ENCODE measurements at regions of chr13 and their contacts with region 1.

Region 1: DNA sequence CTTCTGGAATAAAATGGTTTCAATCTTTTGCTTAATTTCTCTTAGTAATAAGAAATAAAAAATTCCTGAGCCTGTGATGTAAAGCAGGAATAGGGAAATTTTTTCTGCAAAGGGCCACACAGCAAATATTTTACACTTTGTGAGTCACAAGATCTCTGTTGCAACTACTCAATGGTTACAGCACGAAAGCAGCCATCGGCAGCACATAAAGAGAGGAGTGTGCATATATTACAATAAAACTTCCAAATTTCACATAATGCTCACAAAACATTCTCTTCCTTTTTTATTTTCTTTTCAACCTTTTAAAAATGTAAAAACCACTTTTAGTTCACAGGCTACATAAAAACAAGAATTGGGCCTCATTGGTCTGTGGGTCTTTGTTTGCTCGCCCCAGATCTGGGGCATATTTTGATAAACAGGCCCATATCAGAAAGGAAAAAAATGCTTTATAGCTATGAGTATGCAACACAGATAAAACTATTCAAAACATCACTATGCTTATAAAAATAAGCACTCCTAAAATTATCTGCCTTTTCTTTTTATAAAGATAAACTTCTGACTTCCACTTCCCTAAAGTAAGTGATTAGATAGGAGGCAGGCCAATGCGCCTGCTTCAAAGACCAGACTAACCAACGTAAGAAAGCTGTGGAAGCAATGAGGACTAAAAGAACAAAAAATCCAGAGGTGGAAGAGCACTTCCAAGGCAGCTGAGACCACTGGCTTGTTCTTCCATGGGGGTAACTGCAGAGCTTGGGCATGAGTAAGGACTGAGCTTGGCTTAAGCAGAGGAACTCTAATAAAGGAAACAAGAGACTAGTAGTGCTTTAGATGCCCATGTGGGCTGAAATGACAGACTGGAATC is 26.5 kb downstream of the MYCBP2 start:
- DNase-seq: peak; percentile 42 to 73 (median 56)
- H3K4me3 ChIP-seq: peak overlapping the region in 2 of 7 experiments; percentile 5 to 40
- H3K27ac ChIP-seq: peak overlapping the region; percentile 37 to 54
- H3K4me1 ChIP-seq: peaks cover 10 to 42% (median 24%) of the 10 kb centered on the region in 4 experiments
- H3K27me3 ChIP-seq: no peaks in the 10 kb centered on the region

Region 2: DNA sequence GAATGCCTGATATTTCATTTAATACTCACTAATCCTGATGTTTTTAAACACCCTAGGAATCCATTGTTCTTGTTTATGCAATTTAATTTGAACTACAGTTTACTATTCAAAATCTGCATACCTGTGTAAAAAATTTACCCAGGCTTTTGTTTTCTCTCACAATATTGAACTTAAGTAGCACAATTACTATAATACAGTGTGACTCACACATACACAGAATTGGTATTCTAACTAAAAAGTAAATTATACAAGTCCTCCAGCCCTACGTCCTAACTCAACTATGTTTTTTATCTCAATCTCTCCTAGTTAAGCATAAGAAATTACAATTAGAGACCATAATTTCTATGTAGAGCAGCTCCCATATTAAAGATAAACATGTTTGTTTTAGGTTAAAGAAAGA is 15.3 kb before region 1 on chr13:
- CTCF ChIA-PET with region 1: interaction called, 11 read pairs
- POLR2A ChIA-PET with region 1: no interaction called
- DNase-seq: no peak
- H3K4me3 ChIP-seq: no peak overlapping the region
- H3K27ac ChIP-seq: no peak overlapping the region
- H3K4me1 ChIP-seq: no peaks in the 10 kb centered on the region
- H3K27me3 ChIP-seq: no peaks in the 10 kb centered on the region

Region 3: DNA sequence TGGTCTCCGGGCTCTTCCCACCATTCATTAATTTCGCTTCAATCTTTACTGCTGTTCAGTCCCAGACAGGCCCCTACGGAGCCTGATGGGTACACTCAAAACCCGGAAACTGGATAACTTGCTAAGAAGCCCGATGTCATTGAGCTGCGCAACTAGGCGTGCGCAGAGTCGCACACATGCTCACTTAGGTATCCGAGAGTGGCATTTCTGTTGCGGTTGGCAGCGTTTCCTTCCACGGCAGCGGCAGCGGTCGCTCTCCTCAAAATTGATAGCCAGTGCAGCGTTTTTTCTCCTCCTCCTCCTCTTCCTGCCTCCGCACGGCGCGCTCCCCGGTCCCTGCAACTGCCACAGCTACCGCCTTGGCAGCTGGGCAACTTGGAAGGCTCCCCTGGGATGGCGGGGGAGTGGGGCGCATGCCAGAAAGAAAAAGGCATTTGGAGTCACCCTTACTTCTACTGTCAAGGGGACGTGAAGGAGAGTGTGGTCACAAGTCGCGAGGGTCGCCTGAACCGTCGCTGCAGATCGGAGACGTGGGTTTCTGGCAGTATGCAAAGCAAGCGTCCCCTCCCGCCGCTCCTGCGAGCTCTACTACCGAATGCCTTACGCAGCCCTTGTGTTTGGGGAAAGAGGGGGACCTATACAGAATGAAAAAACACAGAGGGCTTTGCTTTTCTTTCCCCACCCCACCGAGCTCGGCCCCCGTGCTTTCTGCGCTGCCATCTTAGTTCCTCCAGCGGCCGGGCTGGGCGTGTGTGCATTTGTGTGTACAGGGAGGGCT is 28.9 kb after region 1 on chr13:
- CTCF ChIA-PET with region 1: interaction called, 12 read pairs
- POLR2A ChIA-PET with region 1: no interaction called
- DNase-seq: peak; percentile 99 to 100 (median 100)
- H3K4me3 ChIP-seq: peak overlapping the region; percentile 76 to 99 (median 94)
- H3K27ac ChIP-seq: peak overlapping the region; percentile 74 to 87
- H3K4me1 ChIP-seq: peaks cover 28 to 59% (median 47%) of the 10 kb centered on the region in 4 experiments
- H3K27me3 ChIP-seq: no peaks in the 10 kb centered on the region

Region 4: DNA sequence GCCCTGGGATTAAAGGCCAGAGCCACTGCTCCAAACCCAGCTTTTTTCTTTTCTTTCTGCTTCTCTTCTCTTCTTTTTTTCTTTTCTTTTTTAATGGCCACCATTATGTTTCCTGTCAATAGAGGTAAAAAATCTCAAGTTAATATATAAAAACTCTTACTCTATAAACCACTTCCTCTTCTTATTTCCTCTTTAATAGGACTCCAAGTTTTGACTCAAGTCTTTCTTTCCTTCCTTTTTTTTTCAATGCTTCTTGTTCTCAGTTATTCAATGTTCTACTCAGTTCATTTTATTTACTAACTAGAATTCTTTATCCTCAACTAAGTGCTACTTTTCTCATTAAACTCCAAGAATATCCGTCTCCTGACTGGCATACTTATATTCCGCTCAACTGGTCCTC is 53.6 kb after region 1 on chr13:
- CTCF ChIA-PET with region 1: no interaction called
- POLR2A ChIA-PET with region 1: no interaction called
- DNase-seq: peak in 2 of 3 donors; percentile 52 to 62
- H3K4me3 ChIP-seq: no peak overlapping the region
- H3K27ac ChIP-seq: no peak overlapping the region
- H3K4me1 ChIP-seq: peaks cover 0 to 15% (median 0%) of the 10 kb centered on the region in 4 experiments
- H3K27me3 ChIP-seq: no peaks in the 10 kb centered on the region